B cell (primary cell): ENCODE measurements at regions of chrX and their contacts with region 1.

Region 1: GRCh38 chrX:13000301-13000811 is 25.4 kb downstream of the TMSB4X start:
- DNase-seq: peak; percentile 79
- ATAC-seq: peak; percentile 72
- H3K4me3 ChIP-seq: peak overlapping the region in 4 of 5 experiments; percentile 3 to 40 (median 10)
- H3K4me3 Mint-ChIP-seq: peak overlapping the region; percentile 84
- H3K27ac ChIP-seq: peak overlapping the region; percentile 76 to 80
- H3K27ac Mint-ChIP-seq: peak overlapping the region; percentile 95
- H3K4me1 ChIP-seq: peaks cover 64 to 69% of the 10 kb centered on the region in 2 donors
- H3K4me1 Mint-ChIP-seq: peaks cover 64% of the 10 kb centered on the region
- H3K27me3 ChIP-seq: no peaks in the 10 kb centered on the region
- H3K27me3 Mint-ChIP-seq: no peaks in the 10 kb centered on the region
- CTCF ChIP-seq: no peak

Region 2: GRCh38 chrX:13074297-13075262 is 74.2 kb after region 1 on chrX:
- CTCF ChIA-PET with region 1: no interaction called
- POLR2A ChIA-PET with region 1: interaction called, 4 read pairs
- intact Hi-C with region 1: loop called (anchors 2 kb)
- DNase-seq: peak; percentile 78
- ATAC-seq: peak; percentile 96
- H3K4me3 ChIP-seq: peak overlapping the region in 2 of 5 experiments; percentile 11 to 13
- H3K4me3 Mint-ChIP-seq: peak overlapping the region; percentile 79
- H3K27ac ChIP-seq: peak overlapping the region; percentile 94 to 98
- H3K27ac Mint-ChIP-seq: peak overlapping the region; percentile 98
- H3K4me1 ChIP-seq: peaks cover 66 to 67% of the 10 kb centered on the region in 2 donors
- H3K4me1 Mint-ChIP-seq: peaks cover 53% of the 10 kb centered on the region
- H3K27me3 ChIP-seq: no peaks in the 10 kb centered on the region
- H3K27me3 Mint-ChIP-seq: no peaks in the 10 kb centered on the region
- CTCF ChIP-seq: no peak